ENCODE measurements at regions of chr1 and their contacts with region 1.

Region 1: DNA sequence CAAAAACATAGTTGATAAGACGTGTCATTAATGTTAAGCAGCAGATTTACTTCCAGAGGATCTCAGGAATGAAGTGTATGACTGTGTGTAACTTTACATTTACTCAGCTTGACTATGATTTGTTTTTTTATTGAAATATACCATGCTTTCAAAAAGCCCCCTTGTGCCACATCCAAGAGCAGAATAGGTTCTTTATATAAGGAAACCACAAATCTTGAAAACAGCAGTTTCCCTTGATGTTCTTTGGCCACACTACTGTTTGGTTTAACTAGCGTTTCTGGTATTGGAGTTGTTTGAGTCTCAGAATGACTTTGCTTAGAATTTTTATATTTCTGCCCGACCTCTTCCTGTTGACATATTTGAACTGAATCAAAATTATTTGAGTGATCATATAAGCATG is 25.0 kb downstream of the LRRC8C start:
- DNase-seq: no peak
- H3K4me3 Mint-ChIP-seq: peak overlapping the region; percentile 14
- H3K27ac Mint-ChIP-seq: peak overlapping the region; percentile 75
- H3K4me1 Mint-ChIP-seq: peaks cover 79% of the 10 kb centered on the region
- H3K27me3 Mint-ChIP-seq: no peaks in the 10 kb centered on the region

Region 2: GRCh38 chr1:89670163-89670562 is 12.3 kb after region 1 on chr1:
- intact Hi-C with region 1: loop called (anchors 1 kb)
- DNase-seq: no peak
- H3K4me3 Mint-ChIP-seq: peak overlapping the region; percentile 44
- H3K27ac Mint-ChIP-seq: peak overlapping the region; percentile 83
- H3K4me1 Mint-ChIP-seq: peaks cover 85% of the 10 kb centered on the region
- H3K27me3 Mint-ChIP-seq: no peaks in the 10 kb centered on the region

Region 3: DNA sequence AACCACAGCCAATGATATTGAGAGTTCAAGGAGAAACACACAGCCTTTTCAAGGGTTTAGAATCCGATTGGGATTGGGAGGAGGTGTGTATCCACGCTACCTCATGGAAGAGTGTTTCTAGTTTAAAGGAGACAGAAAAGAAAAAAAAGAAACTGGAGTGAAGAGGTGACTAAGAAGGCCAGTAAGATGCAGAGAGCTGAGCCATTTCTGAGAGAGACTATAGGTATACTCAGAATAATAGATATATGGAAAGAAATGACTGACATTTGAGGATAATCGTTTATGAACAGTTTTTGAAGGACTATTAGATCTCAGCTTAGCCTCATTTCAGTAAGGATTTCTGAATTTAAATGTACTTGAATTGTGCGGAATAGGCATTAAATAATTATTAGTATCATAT is 17.8 kb after region 1 on chr1:
- intact Hi-C with region 1: loop called (anchors 1 kb)
- DNase-seq: no peak
- H3K4me3 Mint-ChIP-seq: no peak overlapping the region
- H3K27ac Mint-ChIP-seq: peak overlapping the region; percentile 84
- H3K4me1 Mint-ChIP-seq: peaks cover 68% of the 10 kb centered on the region
- H3K27me3 Mint-ChIP-seq: no peaks in the 10 kb centered on the region

Region 4: DNA sequence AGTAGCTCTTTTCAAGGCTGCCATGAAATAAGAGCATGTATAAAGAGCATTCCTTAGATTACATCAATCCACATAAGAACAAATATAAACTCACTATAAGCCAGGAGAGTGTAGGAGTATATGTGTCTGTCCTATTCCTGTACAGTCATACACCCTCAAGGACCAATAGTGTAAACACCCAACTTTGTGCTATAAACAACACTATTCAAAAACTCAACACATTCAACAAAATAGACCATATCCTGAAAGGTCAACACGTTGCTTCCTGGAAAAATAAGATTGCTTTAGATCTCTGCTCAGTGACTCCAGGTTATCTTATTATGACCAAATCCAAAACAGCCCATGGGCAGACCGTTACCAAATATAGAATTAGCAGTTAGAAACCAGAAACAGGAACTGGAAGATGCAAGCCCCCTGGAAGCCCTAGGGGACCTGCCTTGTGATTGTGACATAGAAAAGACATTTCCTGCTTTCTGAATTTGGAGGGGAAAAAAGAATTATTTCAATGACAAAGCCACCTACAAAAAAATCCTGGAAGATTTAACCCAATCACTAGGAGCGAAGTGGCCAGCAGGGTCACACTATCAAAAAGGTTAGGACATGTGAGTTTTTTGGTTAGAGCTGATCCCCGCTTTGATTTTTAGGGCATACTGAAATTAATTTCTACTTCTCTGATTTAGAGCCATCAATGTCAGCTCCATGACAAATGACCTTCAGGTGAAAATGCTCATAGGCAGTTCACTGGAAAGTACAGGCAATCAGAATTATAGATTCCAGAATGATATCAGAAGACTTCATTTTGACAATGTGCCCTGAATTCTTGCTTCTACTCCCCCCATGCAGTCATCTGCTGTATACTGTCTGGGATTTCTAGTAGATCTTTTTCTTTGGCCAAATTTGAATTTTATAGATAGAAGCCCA is 35.0 kb after region 1 on chr1:
- intact Hi-C with region 1: loop called (anchors 2 kb)
- DNase-seq: no peak
- H3K4me3 Mint-ChIP-seq: no peak overlapping the region
- H3K27ac Mint-ChIP-seq: peak overlapping the region; percentile 83
- H3K4me1 Mint-ChIP-seq: peaks cover 81% of the 10 kb centered on the region
- H3K27me3 Mint-ChIP-seq: no peaks in the 10 kb centered on the region

Region 5: DNA sequence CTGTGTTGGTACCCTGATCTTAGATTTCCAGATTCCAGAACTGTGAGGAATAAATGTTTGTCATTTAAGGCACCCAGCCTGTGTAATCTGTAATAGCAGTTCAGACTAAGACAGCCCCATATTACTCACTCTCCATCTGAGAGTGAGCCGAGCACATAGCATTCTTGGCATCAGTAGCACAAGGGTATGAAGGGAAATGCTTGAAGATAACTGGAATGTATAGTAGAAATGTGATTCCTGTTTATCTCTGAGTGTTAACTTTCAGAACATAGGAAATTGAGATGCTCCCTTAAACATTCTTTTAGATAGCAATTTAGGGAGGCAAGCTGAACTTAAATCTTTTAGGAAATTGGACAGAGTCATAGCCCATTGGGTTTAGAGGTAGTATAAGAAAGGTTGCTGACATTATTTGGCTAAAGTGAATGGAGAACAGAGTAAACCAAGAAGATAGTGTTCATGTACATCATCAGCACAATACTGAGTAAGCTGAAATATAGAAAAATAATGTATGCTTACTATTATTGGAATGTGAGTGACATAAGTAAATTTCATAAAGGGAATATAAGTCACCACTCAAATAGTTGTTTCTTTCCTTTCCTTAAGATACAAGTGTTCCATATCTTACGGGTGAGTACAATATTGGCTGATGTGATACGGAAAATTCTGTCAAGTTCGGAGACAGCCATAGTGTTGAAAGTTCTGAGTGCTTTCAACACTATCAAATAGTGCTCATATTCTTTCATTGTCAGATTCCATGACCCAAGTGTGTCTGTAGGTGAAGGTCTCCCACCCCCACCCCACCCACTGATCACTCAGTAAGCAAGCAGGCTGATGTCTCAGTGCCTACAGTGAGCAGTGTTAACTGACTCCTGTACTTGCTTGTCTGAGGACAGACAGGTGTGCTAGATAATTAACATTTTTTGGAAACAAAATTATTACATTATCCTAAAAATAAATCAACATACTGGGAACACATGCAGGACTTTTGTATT is 236.6 kb after region 1 on chr1:
- intact Hi-C with region 1: no loop called
- DNase-seq: no peak
- H3K4me3 Mint-ChIP-seq: no peak overlapping the region
- H3K27ac Mint-ChIP-seq: no peak overlapping the region
- H3K4me1 Mint-ChIP-seq: peaks cover 13% of the 10 kb centered on the region
- H3K27me3 Mint-ChIP-seq: no peaks in the 10 kb centered on the region